Esophagus muscularis mucosa (tissue), 4 donors: ENCODE measurements at regions of chr11 and their contacts with region 1.

Region 1: GRCh38 chr11:130434521-130435223 is 6.3 kb upstream of the ADAMTS8 start:
- DNase-seq: no peak
- H3K4me3 ChIP-seq: peak overlapping the region; percentile 54 to 66 (median 60)
- H3K27ac ChIP-seq: peak overlapping the region; percentile 78 to 82 (median 80)
- H3K4me1 ChIP-seq: peaks cover 10 to 31% (median 21%) of the 10 kb centered on the region in 4 donors
- H3K27me3 ChIP-seq: peaks cover 0 to under 1% (median 0%) of the 10 kb centered on the region in 4 donors
- CTCF ChIP-seq: peak; percentile 67 to 83 (median 79)
- EP300 ChIP-seq: no peak
- POLR2A ChIP-seq: no peak

Region 2: DNA sequence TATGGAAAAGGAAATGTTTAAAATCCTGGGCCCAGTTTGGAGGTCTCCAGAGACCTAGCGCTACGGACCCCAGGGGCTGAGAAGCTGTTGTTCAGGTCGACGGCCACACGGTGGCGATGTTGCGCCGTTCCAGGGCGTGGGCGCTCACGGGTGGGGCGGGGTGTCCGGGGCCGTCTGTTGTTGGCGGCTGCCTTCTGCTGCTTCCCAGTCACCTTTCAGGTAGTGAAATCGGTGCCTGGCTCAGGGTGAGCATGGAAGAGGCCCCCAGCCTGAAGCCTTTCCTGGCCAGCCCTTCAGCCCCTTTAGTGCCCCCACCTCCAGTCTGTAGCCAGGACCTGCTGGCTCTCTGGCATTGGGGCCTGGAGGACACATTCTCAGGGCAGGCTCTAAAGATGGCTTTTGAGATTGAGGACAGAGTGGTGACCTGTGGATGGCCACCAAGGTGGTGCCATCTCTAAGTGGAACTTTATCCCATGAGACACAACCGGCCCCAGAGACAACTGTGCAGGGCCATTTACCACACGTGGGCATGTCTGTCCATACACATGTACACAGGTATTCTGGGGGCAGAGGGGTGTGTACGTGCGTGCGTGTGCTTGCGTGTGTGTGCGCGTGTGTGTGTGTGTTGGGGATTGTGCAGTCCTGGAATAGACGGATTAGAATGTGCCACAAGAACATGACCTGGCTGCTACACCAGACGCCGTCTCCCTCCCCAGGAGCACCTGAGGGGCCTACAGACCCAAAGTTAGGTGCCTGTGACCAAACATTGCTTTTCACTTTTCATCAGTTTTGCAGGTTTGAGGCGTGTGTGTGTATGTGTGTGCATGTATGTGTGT is 221.3 kb before region 1 on chr11:
- intact Hi-C with region 1: loop called (anchors 5 kb)
- DNase-seq: peak; percentile 88
- H3K4me3 ChIP-seq: peak overlapping the region in 1 of 4 donors; percentile 32
- H3K27ac ChIP-seq: no peak overlapping the region
- H3K4me1 ChIP-seq: peaks cover 6 to 9% (median 6%) of the 10 kb centered on the region in 4 donors
- H3K27me3 ChIP-seq: peaks cover 0 to 9% (median 0%) of the 10 kb centered on the region in 4 donors
- CTCF ChIP-seq: peak in 2 of 3 experiments; percentile 88 to 93
- EP300 ChIP-seq: no peak
- POLR2A ChIP-seq: no peak

Region 3: DNA sequence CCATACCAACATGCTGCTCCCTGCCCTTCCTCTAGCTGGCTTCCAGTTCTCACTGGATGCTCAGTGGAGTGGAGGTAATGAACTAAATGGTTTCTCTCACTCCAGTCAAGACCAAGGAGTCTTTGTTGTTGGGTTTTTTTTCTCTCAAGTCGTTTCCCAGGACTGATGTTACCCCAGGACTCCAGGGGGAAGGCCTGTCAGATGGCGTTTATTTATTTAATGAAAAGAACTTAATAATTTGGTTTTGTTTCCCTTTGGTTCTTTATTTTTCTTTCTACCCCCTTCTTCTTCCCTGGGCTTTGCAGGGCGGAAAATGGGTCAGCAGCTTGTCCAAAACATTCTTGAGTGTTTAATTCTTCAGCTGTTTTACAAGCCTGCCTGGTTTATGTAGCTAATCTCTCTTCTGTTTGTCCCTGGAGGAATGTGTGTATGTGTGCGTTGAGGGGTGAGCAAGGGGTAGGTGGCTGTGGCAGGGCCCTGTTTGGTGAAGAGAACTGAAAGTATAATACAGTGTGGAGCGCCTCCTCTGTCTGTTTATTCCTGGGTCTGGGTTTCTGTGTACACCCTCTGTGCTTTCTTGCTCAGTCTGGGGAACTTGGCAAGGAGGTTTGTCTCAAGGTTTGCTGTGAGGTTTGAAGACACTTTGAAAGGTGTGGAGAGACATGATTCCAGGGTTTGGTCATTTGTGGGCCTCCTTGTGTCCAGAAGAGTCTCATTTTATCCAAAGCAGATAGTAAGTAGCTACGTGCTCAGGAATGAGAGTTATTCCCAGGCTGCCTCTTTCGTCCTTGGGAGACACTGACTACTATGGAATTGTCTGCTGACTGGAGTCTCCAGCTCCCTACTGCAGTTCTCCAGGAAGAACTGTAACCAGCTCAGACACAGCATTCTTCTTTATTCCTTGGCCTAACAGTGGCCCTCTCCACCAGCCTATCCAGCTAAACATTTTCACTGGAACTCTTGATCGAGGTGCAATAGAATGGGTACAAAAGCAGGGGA is 189.3 kb after region 1 on chr11:
- intact Hi-C with region 1: loop called (anchors 5 kb)
- DNase-seq: no peak
- H3K4me3 ChIP-seq: no peak overlapping the region
- H3K27ac ChIP-seq: peak overlapping the region; percentile 62 to 68 (median 66)
- H3K4me1 ChIP-seq: peaks cover 0 to 19% (median 17%) of the 10 kb centered on the region in 4 donors
- H3K27me3 ChIP-seq: no peaks in the 10 kb centered on the region
- CTCF ChIP-seq: peak; percentile 9 to 22 (median 19)
- EP300 ChIP-seq: no peak
- POLR2A ChIP-seq: no peak

Region 4: GRCh38 chr11:130634961-130635473 is 200.3 kb after region 1 on chr11:
- intact Hi-C with region 1: no loop called
- DNase-seq: no peak
- H3K4me3 ChIP-seq: no peak overlapping the region
- H3K27ac ChIP-seq: peak overlapping the region in 1 of 4 donors; percentile 22
- H3K4me1 ChIP-seq: peaks cover 3 to 48% (median 45%) of the 10 kb centered on the region in 4 donors
- H3K27me3 ChIP-seq: no peaks in the 10 kb centered on the region
- CTCF ChIP-seq: no peak
- EP300 ChIP-seq: no peak
- POLR2A ChIP-seq: no peak

Region 5: DNA sequence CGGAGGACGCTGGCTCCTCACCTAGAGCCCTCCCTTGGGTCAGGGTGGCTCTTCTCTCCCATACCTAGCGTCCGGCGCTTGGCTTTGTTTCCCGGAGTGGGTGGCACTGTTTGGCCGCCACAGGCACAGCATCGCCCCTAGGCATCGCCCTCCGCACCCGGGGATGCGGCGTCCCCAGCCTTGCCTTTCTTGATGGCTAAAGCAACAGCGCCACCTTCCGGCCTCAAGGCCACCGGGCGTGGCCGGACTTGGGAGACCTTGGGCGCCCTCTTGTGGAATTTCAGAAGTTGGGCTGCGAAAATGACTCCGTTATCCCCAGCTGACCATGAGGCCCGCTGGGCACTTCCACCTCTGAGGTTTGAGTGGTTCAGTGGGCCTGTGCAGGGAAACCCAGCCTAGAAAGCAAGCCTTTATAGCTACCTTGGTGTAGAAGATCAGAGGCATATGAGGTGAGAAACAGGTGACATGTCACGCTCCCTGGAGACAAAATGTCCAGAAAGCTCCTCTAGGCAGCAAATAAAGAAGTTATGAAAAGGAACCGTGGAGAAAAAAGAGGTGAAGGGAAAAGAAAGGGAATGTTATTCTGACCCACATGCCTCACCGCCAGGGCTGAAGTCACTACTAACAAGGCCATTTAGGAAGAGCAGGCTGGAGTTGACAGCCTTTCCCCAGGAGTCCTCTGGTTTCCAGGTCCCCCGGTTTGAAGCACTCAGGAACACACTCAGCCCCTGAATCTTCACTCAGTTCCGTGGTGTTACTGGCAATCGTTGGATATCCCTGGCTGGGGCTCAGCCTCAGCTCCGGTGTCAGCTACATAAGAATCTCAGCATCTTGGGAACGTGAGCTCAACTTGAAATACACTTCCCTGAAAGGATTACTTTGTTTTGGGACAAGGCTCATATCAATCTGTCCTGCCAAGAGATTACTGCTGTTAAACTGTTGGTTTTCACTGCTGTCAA is 427.5 kb after region 1 on chr11:
- intact Hi-C with region 1: loop called (anchors 1 kb)
- DNase-seq: peak; percentile 96
- H3K4me3 ChIP-seq: peak overlapping the region; percentile 16 to 36 (median 26)
- H3K27ac ChIP-seq: peak overlapping the region in 2 of 4 donors; percentile 38 to 40
- H3K4me1 ChIP-seq: peaks cover 19 to 43% (median 38%) of the 10 kb centered on the region in 4 donors
- H3K27me3 ChIP-seq: no peaks in the 10 kb centered on the region
- CTCF ChIP-seq: peak in 2 of 3 experiments; percentile 100
- EP300 ChIP-seq: no peak
- POLR2A ChIP-seq: no peak